Mammary epithelial cell (primary cell): ENCODE measurements at regions of chr10 and their contacts with region 1.

Region 1: DNA sequence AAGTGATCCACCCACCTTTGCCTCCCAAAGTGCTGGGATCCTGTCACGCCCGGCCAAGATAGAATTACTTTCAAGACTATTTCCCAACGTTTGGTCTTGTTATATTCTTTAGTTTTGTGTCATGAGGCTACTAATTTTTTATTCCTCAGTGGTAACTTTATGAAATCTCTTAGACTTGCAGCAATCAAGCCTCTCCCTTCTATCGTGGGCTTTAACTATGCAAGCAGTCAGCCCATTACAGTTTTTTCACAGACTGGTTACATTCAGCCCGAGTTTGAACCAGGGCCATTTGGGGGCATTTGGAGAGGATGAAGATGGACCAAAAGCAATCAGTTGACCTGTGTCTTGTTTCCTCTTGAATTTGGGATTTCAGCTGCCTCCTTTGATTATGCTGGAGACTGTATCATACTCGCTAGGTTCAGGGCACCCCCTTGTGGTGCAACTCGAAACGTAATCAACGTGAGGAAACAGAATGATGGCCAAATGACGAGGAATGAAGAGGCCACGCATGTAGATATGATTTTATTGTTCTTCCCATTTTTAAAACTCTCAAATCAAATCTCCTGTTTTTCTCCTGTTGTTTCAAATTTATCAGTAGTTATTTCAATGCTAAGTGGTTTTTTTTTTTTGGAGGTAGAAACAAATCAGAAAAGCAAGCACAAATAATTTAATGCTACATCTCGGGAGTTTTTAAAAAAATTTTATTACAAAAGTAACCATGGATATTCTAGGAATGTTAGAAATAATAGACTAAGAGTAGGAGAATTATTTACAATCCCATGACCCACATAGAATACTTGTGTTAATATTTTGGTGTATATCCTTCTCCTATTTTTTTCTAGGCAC is 151.6 kb downstream of the KIAA1217 start:
- DNase-seq: peak; percentile 67
- H3K4me3 ChIP-seq: no peak overlapping the region
- H3K27ac ChIP-seq: no peak overlapping the region
- H3K4me1 ChIP-seq: no peaks in the 10 kb centered on the region
- H3K27me3 ChIP-seq: no peaks in the 10 kb centered on the region
- CTCF ChIP-seq: peak; percentile 82 to 88

Region 2: DNA sequence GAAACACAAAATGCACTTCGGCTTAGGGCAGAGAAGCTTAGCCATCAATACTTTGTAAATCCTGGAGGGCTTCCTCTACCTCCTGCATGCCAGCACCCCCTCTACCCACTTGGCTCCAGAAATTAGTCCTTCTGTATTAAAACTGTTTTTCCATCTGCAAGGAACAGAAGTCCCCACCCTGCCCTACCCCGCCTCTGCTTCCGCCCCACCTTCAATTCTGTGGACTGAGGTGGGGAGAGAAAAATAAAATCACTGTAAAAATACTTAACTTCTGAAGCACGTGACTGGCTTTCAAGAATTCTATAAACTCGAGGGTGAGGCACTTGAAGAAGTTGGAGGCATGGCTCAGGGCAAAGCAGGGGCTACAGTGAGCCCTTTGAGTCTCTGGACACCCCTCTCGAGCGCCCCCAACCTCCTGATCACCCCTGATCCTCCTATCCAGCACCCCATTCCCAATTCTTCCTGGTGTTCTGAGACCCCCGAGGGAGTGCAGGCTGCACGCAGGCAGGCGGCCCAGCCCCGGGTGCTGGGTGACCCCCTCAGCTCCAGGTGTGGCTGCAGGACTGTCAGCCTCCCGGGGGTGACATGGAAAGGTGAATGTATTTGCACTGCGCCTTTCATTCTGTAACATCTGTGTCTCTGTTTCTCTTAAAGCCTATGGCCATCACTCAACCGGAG is 158.9 kb before region 1 on chr10:
- CTCF ChIA-PET with region 1: no interaction called
- dilution Hi-C with region 1: no loop called
- in situ Hi-C with region 1: no loop called
- intact Hi-C with region 1: loop called (anchors 1 kb)
- DNase-seq: no peak
- H3K4me3 ChIP-seq: no peak overlapping the region
- H3K27ac ChIP-seq: no peak overlapping the region
- H3K4me1 ChIP-seq: no peaks in the 10 kb centered on the region
- H3K27me3 ChIP-seq: no peaks in the 10 kb centered on the region
- CTCF ChIP-seq: no peak

Region 3: DNA sequence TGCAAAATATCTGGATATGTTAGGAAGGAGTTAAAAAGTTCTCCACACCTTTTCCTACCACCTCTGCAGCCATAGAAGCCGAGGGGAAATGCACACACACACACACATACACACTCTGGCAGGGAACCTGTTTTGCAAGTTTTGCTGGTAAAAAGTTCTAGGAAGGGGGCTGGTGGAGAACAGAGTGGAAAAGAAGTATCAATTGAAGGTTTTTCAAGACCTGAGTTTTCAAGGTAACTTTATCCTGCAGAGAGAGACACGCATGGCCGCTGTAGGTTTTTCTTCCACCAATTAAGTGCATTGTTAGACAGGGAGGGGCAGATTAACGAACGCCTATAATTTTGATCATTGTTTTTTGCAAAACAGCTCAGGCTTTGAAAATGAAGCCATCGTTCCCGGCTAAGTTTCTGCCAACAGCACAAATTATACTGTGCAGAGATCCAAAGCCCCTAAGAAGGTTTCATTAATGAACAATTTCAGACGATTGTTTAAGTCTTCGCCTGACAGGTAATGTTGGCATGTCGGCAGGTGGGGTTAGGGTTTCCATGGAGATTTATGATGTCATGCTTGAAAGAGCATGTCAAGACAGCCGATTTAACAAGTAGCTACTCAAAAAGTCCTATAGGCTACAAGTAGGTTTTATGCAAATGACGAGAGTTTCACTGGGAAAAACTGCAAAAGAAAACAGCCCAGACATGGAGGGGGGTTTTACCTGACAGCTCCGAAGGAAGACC is 121.8 kb before region 1 on chr10:
- CTCF ChIA-PET with region 1: no interaction called
- dilution Hi-C with region 1: no loop called
- in situ Hi-C with region 1: no loop called
- intact Hi-C with region 1: loop called (anchors 1 kb)
- DNase-seq: peak; percentile 91
- H3K4me3 ChIP-seq: peak overlapping the region; percentile 53 to 60 (median 58)
- H3K27ac ChIP-seq: peak overlapping the region; percentile 87
- H3K4me1 ChIP-seq: peaks cover 30% of the 10 kb centered on the region
- H3K27me3 ChIP-seq: no peaks in the 10 kb centered on the region
- CTCF ChIP-seq: no peak

Region 4: DNA sequence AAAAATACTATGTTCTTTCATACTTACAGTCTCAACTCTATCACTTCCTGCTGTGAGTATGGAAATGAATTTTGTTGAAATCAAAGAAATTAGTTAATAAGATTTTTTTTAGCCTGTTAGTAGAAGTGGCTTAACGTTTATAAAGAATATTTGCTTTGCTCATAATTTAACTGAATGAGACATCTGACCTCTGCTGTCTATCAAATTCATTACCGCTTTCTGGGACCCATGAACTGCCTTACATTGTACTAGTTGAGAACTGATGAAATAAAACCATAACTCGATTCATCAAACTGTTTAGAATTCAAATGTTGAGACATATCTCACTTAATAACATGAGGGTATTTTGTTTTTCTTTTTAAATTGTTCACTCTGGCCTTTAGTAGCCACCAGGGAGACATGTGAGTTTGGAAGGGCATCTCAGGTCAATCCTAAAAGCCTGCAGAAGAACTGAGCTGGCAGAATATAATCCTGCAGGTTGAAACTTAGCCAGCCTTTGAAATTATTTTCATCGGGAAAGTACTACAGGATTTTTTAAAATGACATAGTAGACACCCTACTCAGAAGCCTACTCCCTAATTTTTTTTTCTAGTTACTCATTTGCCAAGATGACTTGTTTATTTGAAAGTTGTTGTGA is 72.8 kb before region 1 on chr10:
- CTCF ChIA-PET with region 1: no interaction called
- dilution Hi-C with region 1: no loop called
- in situ Hi-C with region 1: no loop called
- intact Hi-C with region 1: loop called (anchors 1 kb)
- DNase-seq: no peak
- H3K4me3 ChIP-seq: no peak overlapping the region
- H3K27ac ChIP-seq: no peak overlapping the region
- H3K4me1 ChIP-seq: peaks cover 14% of the 10 kb centered on the region
- H3K27me3 ChIP-seq: no peaks in the 10 kb centered on the region
- CTCF ChIP-seq: peak in 1 of 2 donors; percentile 20

Region 5: GRCh38 chr10:24503461-24504320 is 143.2 kb after region 1 on chr10:
- CTCF ChIA-PET with region 1: no interaction called
- dilution Hi-C with region 1: no loop called
- in situ Hi-C with region 1: no loop called
- intact Hi-C with region 1: loop called (anchors 1 kb)
- DNase-seq: peak; percentile 54
- H3K4me3 ChIP-seq: no peak overlapping the region
- H3K27ac ChIP-seq: no peak overlapping the region
- H3K4me1 ChIP-seq: peaks cover 2% of the 10 kb centered on the region
- H3K27me3 ChIP-seq: no peaks in the 10 kb centered on the region
- CTCF ChIP-seq: peak; percentile 73

Region 6: GRCh38 chr10:24556750-24557742 is 196.5 kb after region 1 on chr10:
- CTCF ChIA-PET with region 1: no interaction called
- dilution Hi-C with region 1: no loop called
- in situ Hi-C with region 1: no loop called
- intact Hi-C with region 1: loop called (anchors 5 kb)
- DNase-seq: peak; percentile 46
- H3K4me3 ChIP-seq: no peak overlapping the region
- H3K27ac ChIP-seq: no peak overlapping the region
- H3K4me1 ChIP-seq: peaks cover 16% of the 10 kb centered on the region
- H3K27me3 ChIP-seq: no peaks in the 10 kb centered on the region
- CTCF ChIP-seq: peak; percentile 72 to 75

Region 7: GRCh38 chr10:24701447-24701846 is 340.9 kb after region 1 on chr10:
- CTCF ChIA-PET with region 1: no interaction called
- dilution Hi-C with region 1: no loop called
- in situ Hi-C with region 1: no loop called
- intact Hi-C with region 1: no loop called
- DNase-seq: no peak
- H3K4me3 ChIP-seq: no peak overlapping the region
- H3K27ac ChIP-seq: no peak overlapping the region
- H3K4me1 ChIP-seq: peaks cover 14% of the 10 kb centered on the region
- H3K27me3 ChIP-seq: no peaks in the 10 kb centered on the region
- CTCF ChIP-seq: no peak